Activated CD4-positive, alpha-beta memory T cell treated with anti-CD3 and anti-CD28 coated beads for 36 hours (primary cell): ENCODE measurements at regions of chr5 and their contacts with region 1.

Region 1: DNA sequence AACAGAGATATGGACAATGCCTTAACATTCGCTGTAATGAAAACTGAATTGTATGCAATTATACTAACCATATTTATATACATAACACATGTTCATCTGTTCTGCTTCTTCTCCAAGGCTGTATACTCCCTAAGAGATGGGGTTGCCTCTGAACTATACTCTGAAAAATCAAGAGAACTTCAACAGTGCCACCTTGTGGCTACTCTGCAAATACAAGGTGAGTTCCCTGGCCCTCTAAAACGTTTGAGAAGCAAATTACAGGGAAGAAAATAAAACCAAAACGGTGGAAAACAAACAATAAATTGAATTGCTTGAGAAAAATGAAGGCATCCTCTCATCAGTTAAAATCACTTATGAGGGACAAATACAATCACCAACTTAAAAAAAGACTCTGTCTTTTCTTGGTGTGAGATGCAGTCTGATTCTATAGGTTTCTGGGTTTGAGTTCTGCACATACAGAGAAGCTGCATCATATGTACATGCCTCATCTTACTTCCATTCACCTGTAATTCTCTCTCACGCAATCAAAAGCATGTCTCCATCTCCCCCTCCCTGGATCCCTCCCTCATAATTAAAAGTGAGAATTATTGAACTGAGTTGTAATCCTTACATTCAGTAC is 98.6 kb downstream of the FBXW11 start:
- DNase-seq: peak; percentile 46
- H3K4me3 Mint-ChIP-seq: no peak overlapping the region
- H3K27ac Mint-ChIP-seq: peak overlapping the region; percentile 74
- H3K4me1 Mint-ChIP-seq: peaks cover 60% of the 10 kb centered on the region
- H3K27me3 Mint-ChIP-seq: no peaks in the 10 kb centered on the region

Region 2: DNA sequence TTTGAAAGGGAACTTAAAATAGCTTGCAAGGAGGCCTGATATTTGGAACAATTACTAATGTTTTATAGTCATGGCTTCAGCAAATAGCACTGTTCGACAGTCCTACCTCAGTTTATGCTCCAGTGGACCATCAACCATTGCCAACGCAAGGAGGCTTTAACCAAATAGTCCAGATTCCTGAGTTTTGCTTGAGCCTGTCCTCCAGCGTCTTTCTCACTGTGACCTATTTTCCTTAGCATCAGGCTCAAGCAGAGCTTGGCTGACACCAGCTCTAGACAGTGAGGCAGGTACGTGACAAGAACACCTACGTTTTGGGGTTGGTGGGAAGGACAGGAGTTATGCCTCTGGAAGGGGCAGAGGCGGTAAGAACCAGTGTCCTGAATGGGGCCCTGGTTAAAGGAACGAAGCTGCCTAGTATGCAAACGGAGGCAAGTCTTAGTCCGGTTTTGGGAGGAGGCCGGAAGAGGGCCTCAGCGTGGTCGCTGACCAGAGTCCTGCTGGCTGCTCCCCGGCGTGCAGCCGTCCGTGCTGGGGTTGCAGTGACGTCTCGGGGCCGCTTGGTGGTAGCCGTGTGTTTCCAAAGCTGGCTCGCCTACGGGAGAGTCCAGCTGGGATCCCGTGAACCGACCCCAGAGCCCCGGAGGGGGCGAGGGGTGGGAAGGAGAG is 489.4 kb before region 1 on chr5:
- CTCF ChIA-PET with region 1: interaction called, 25 read pairs
- POLR2A ChIA-PET with region 1: interaction called, 3 read pairs
- intact Hi-C with region 1: loop called (anchors 1 kb)
- DNase-seq: peak; percentile 74
- H3K4me3 Mint-ChIP-seq: peak overlapping the region; percentile 52
- H3K27ac Mint-ChIP-seq: no peak overlapping the region
- H3K4me1 Mint-ChIP-seq: peaks cover 12% of the 10 kb centered on the region
- H3K27me3 Mint-ChIP-seq: peaks cover 14% of the 10 kb centered on the region

Region 3: DNA sequence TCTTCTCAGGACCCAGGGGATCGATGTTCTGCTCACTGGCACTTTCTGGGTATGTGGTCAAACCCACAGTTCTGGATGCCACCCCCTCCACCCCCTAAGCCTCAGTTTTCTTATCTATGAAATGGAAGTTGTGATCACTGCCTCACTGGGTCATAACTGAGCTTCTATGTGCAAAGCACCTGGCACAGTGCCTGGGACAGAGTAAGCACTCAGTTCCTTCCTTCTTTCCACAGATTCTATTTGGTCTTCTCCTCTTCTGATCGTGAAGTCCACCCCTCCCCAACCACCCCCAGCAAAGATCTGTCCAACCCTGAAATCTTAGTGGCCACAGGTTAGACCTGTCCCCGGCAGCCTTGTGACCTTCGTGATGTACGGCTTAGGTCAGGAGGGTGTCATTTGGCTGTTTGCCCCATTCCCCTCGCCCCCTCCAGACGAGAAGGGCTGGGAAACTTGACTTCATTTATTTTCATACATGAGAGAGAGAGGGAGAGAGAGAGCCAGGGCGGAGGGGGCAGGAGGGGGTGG is 307.0 kb before region 1 on chr5:
- CTCF ChIA-PET with region 1: no interaction called
- POLR2A ChIA-PET with region 1: no interaction called
- intact Hi-C with region 1: loop called (anchors 1 kb)
- DNase-seq: no peak
- H3K4me3 Mint-ChIP-seq: no peak overlapping the region
- H3K27ac Mint-ChIP-seq: no peak overlapping the region
- H3K4me1 Mint-ChIP-seq: peaks cover 12% of the 10 kb centered on the region
- H3K27me3 Mint-ChIP-seq: peaks cover 9% of the 10 kb centered on the region

Region 4: DNA sequence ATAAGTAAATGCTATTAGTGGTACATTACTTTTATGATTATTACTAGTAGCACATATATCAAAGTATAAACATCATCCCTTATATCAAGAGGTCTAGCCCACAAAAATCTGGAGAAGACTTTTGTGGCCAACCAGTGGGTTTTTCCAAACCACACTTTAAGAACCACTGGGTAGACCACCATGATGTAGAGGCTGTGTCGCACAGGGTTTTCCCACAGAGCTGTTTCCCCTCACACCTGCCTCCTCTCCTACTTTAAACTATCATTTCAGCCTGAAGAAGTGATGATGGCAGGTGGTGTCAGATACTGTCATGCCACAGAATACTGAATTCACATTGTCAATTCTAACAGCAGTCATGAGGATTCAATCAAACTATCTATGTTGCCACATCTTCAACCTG is 10.6 kb before region 1 on chr5:
- CTCF ChIA-PET with region 1: interaction called, 7 read pairs
- POLR2A ChIA-PET with region 1: no interaction called
- intact Hi-C with region 1: loop called (anchors 1 kb)
- DNase-seq: peak; percentile 21
- H3K4me3 Mint-ChIP-seq: no peak overlapping the region
- H3K27ac Mint-ChIP-seq: no peak overlapping the region
- H3K4me1 Mint-ChIP-seq: peaks cover 20% of the 10 kb centered on the region
- H3K27me3 Mint-ChIP-seq: no peaks in the 10 kb centered on the region

Region 5: DNA sequence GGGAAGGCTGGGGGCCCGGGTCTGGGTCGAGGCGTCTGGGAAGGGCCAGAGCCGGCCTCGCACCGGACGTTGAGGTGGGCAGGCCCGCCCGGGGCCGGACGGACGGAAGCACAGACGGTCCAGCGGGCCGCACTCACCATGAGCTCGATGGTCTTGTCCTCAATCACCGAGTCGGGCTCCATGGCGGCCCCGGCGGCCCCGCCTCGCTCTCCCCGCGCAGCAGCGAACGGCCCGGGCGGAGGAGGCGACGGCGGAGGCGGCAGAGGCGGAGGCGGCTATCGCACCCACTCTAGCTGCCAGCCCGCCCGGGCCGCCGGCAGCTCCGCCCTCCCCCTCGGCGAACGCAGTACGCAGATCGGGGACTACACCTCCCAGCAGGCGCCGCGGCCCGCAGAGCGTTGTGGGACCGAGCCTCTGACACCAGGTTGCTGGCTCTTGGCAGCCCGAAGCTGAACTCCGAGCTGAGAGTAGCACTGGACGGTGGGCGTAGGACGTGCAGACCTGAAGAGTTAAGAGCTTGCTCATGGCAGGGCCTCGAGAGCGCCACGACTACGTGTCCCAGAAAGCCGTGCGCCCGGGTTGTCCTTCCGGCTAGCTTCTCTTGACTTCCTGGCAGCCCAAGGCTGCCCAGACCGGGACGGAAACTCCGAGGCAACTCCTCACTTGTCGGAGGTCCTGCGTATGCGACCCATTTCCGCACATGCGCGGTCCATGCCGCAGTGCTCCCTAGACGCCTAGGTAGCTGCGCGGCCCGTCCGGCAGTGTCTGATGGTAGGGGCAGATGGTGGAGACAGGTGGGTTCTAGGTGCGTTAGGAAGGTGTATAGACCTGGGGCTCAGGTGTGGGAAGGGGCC is 98.7 kb after region 1 on chr5 and contains the start of gene FBXW11:
- CTCF ChIA-PET with region 1: interaction called, 78 read pairs
- POLR2A ChIA-PET with region 1: interaction called, 19 read pairs
- intact Hi-C with region 1: loop called (anchors 1 kb)
- DNase-seq: peak; percentile 97
- H3K4me3 Mint-ChIP-seq: peak within 1 kb of the TSS; percentile 93
- H3K27ac Mint-ChIP-seq: peak within 1 kb of the TSS; percentile 92
- H3K4me1 Mint-ChIP-seq: peaks cover 53% of the 10 kb centered on the region
- H3K27me3 Mint-ChIP-seq: no peaks in the 10 kb centered on the region
- total RNA-seq, gene FBXW11: 47.2 to 47.4 TPM

Region 6: GRCh38 chr5:172229904-172230303 is 322.1 kb after region 1 on chr5:
- CTCF ChIA-PET with region 1: no interaction called
- POLR2A ChIA-PET with region 1: no interaction called
- intact Hi-C with region 1: loop called (anchors 1 kb)
- DNase-seq: no peak
- H3K4me3 Mint-ChIP-seq: no peak overlapping the region
- H3K27ac Mint-ChIP-seq: no peak overlapping the region
- H3K4me1 Mint-ChIP-seq: peaks cover 30% of the 10 kb centered on the region
- H3K27me3 Mint-ChIP-seq: peaks cover 4% of the 10 kb centered on the region